ENCODE measurements at regions of chr5 and their contacts with region 1.

Region 1: DNA sequence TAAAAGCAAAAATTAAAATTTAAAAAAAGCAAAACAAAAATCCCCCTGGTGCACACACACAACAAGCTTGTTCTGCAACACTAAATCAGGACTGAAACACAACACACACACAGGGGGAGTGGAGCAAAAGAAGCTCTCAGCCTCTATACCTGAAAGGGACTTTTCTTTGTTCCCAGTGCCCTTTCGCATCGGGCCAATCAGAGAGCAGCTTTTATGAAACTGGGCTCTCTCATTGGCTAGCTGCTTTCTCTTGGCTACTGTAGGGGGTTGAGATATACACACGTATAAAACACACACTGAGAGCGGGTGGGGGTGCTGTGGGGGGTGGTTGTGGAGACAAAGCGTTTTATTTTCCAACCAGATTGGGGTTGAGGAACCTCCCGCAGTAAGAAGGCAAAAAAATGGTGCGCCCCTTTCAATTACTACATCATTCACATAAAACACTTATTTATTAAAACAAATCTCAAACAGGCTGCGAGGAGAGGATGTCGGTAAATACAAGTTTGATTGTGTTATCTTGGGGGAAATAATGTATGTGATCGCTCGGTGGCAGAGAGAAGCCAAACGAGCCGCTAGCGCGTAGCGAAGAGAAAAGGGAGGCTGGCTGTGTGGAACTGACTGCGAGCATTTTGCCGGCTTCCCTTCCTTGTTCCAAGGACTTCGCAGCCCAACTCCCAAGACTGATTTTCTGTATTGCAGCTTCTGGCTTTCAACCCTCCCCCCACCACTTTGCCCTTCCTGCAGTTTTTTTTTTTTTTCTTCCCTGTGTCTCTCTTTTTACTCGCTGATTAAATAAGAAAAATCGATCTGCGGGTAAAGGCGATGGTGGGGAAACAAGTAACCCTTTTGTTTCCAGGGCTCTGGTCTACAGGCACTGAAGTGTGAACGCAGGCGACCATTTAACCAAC is 2.5 kb upstream of the ZNF608 start:
- DNase-seq: peak; percentile 37
- ATAC-seq: peak; percentile 71
- H3K4me3 Mint-ChIP-seq: no peak overlapping the region
- H3K27ac Mint-ChIP-seq: no peak overlapping the region
- H3K4me1 Mint-ChIP-seq: peaks cover 17% of the 10 kb centered on the region
- H3K27me3 Mint-ChIP-seq: no peaks in the 10 kb centered on the region
- CTCF ChIP-seq: no peak

Region 2: GRCh38 chr5:124034963-124035362 is 714.0 kb before region 1 on chr5:
- CTCF ChIA-PET with region 1: no interaction called
- POLR2A ChIA-PET with region 1: interaction called, 6 read pairs
- intact Hi-C with region 1: loop called (anchors 1 kb)
- DNase-seq: no peak
- ATAC-seq: peak; percentile 94
- H3K4me3 Mint-ChIP-seq: peak overlapping the region; percentile 48
- H3K27ac Mint-ChIP-seq: peak overlapping the region; percentile 92
- H3K4me1 Mint-ChIP-seq: peaks cover 52% of the 10 kb centered on the region
- H3K27me3 Mint-ChIP-seq: no peaks in the 10 kb centered on the region
- CTCF ChIP-seq: no peak

Region 3: GRCh38 chr5:124524552-124525232 is 224.2 kb before region 1 on chr5:
- CTCF ChIA-PET with region 1: interaction called, 7 read pairs
- POLR2A ChIA-PET with region 1: interaction called, 7 read pairs
- intact Hi-C with region 1: loop called (anchors 1 kb)
- DNase-seq: no peak
- ATAC-seq: peak; percentile 92
- H3K4me3 Mint-ChIP-seq: no peak overlapping the region
- H3K27ac Mint-ChIP-seq: peak overlapping the region; percentile 3
- H3K4me1 Mint-ChIP-seq: peaks cover 35% of the 10 kb centered on the region
- H3K27me3 Mint-ChIP-seq: peaks cover 9% of the 10 kb centered on the region
- CTCF ChIP-seq: no peak

Region 4: GRCh38 chr5:124706729-124707361 is 42.1 kb before region 1 on chr5:
- CTCF ChIA-PET with region 1: interaction called, 6 read pairs
- POLR2A ChIA-PET with region 1: interaction called, 99 read pairs
- intact Hi-C with region 1: loop called (anchors 1 kb)
- DNase-seq: no peak
- ATAC-seq: no peak
- H3K4me3 Mint-ChIP-seq: peak overlapping the region; percentile 67
- H3K27ac Mint-ChIP-seq: peak overlapping the region; percentile 89
- H3K4me1 Mint-ChIP-seq: peaks cover 92% of the 10 kb centered on the region
- H3K27me3 Mint-ChIP-seq: no peaks in the 10 kb centered on the region
- CTCF ChIP-seq: no peak

Region 5: GRCh38 chr5:124895236-124895635 is 146.3 kb after region 1 on chr5:
- CTCF ChIA-PET with region 1: no interaction called
- POLR2A ChIA-PET with region 1: interaction called, 14 read pairs
- intact Hi-C with region 1: no loop called
- DNase-seq: no peak
- ATAC-seq: no peak
- H3K4me3 Mint-ChIP-seq: no peak overlapping the region
- H3K27ac Mint-ChIP-seq: no peak overlapping the region
- H3K4me1 Mint-ChIP-seq: no peaks in the 10 kb centered on the region
- H3K27me3 Mint-ChIP-seq: no peaks in the 10 kb centered on the region
- CTCF ChIP-seq: no peak

Region 6: GRCh38 chr5:125006011-125006685 is 257.2 kb after region 1 on chr5:
- CTCF ChIA-PET with region 1: interaction called, 3 read pairs
- POLR2A ChIA-PET with region 1: interaction called, 35 read pairs
- intact Hi-C with region 1: loop called (anchors 1 kb)
- DNase-seq: no peak
- ATAC-seq: peak; percentile 67
- H3K4me3 Mint-ChIP-seq: peak overlapping the region; percentile 66
- H3K27ac Mint-ChIP-seq: peak overlapping the region; percentile 90
- H3K4me1 Mint-ChIP-seq: peaks cover 71% of the 10 kb centered on the region
- H3K27me3 Mint-ChIP-seq: no peaks in the 10 kb centered on the region
- CTCF ChIP-seq: no peak